Right ventricle myocardium inferior (tissue), 1 donor: ENCODE measurements at regions of chr2 and their contacts with region 1.

Region 1: GRCh38 chr2:213151437-213152064 is at the start of gene IKZF2:
- DNase-seq: peak; percentile 93
- ATAC-seq: peak; percentile 93
- total RNA-seq, gene IKZF2: 4.7 TPM

Region 2: GRCh38 chr2:212686285-212686895 is 465.2 kb before region 1 on chr2:
- intact Hi-C with region 1: loop called (anchors 2 kb)
- DNase-seq: peak; percentile 63
- ATAC-seq: no peak

Region 3: DNA sequence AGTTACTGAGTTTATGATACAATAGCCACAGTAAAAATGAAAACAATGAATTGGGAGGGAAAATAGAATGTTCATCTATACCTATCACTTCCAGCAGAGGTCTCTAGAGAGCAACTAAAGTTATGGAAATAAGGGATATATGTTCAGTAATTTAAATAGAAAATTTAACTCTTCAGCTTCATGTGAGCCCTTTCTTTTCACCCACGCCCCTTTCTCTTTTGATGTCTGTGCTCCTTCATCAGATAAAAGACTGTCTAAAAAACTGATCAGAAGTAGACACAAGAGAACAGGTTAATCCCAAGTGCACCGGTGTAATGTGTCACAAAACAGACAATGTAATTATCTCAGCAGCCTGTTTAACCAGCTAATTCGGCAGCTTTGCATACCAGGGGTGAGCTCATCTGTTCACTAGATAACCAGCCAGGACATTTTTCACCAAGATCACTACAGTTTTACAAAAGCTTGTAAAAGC is 374.5 kb before region 1 on chr2:
- intact Hi-C with region 1: loop called (anchors 1 kb)
- DNase-seq: no peak
- ATAC-seq: no peak

Region 4: GRCh38 chr2:212843409-212844199 is 307.9 kb before region 1 on chr2:
- intact Hi-C with region 1: loop called (anchors 10 kb)
- DNase-seq: no peak
- ATAC-seq: no peak

Region 5: GRCh38 chr2:213002383-213002782 is 149.2 kb before region 1 on chr2:
- intact Hi-C with region 1: loop called (anchors 10 kb)
- DNase-seq: no peak
- ATAC-seq: no peak

Region 6: DNA sequence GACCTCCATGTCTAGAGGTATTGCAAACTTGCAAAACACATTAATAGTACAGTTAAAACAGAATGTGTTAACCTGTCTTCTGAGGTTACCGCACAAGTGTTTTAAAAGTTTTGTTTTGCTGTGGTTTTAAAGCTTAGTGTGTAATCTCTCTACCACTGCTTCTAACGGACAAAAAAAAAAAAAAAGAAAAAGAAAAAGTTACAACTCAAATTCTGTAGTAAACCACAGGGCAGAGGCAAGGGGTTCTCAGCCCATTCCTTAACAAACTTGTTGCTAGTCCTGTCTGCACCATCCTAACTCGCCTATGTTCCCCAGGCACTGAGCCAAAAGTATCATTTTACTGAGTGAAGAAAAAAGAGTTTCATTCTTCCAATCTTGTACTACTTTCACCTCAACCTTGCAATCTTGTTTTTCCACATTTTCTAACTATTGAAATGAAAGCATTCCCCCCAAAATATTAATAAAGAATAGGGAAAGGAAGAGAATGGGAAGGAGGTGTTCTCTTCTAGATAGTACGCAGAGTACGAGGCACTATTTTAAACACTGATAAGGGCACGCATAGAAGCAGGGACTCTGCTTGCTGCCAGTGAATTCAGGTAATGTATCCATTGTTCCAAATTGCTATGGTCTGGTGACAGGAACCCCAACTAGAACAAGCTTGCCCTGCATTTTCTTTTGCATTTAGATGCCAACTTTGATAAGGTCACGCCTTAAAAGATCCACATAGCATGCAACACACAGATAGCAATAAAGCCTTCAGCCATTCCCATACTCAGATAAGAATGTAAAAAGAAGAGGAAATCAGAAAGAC is 47.3 kb before region 1 on chr2:
- intact Hi-C with region 1: loop called (anchors 5 kb)
- DNase-seq: no peak
- ATAC-seq: peak; percentile 85